Activated CD8-positive, alpha-beta T cell treated with anti-CD3 and anti-CD28 coated beads for 36 hours (primary cell): ENCODE measurements at regions of chr2 and their contacts with region 1.

Region 1: GRCh38 chr2:28566521-28567041 is 70.7 kb downstream of the PLB1 start:
- DNase-seq: peak; percentile 91
- ATAC-seq: peak; percentile 99
- H3K4me3 Mint-ChIP-seq: peak overlapping the region; percentile 81
- H3K27ac Mint-ChIP-seq: peak overlapping the region; percentile 76
- H3K4me1 Mint-ChIP-seq: peaks cover 11% of the 10 kb centered on the region
- H3K27me3 Mint-ChIP-seq: peaks cover 2% of the 10 kb centered on the region
- CTCF ChIP-seq: peak; percentile 100

Region 2: DNA sequence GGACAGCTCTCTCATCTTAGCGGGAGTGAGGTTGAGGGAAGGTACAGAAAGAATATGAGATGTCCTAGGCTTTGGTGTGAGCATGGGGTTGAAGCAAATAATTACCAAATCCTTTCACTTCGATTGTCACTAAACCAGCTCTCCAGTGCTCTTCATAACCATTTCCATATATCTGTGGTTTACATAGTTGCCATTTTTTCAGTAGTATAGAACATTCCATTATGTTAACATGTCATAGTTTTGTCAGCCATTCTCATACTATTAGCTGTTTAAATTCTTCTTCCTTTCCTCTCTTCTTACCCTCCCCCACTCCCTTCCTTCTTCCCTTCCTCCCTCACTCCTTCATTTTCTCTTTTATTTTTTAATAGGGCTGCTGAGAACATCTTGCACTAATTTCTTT is 470.2 kb before region 1 on chr2:
- CTCF ChIA-PET with region 1: no interaction called
- POLR2A ChIA-PET with region 1: no interaction called
- intact Hi-C with region 1: no loop called
- DNase-seq: no peak
- ATAC-seq: no peak
- H3K4me3 Mint-ChIP-seq: no peak overlapping the region
- H3K27ac Mint-ChIP-seq: no peak overlapping the region
- H3K4me1 Mint-ChIP-seq: no peaks in the 10 kb centered on the region
- H3K27me3 Mint-ChIP-seq: no peaks in the 10 kb centered on the region
- CTCF ChIP-seq: no peak

Region 3: GRCh38 chr2:28137221-28137620 is 429.4 kb before region 1 on chr2:
- CTCF ChIA-PET with region 1: no interaction called
- POLR2A ChIA-PET with region 1: no interaction called
- intact Hi-C with region 1: no loop called
- DNase-seq: no peak
- ATAC-seq: no peak
- H3K4me3 Mint-ChIP-seq: no peak overlapping the region
- H3K27ac Mint-ChIP-seq: no peak overlapping the region
- H3K4me1 Mint-ChIP-seq: peaks cover 21% of the 10 kb centered on the region
- H3K27me3 Mint-ChIP-seq: no peaks in the 10 kb centered on the region
- CTCF ChIP-seq: no peak

Region 4: GRCh38 chr2:28583899-28584553 is 17.4 kb after region 1 on chr2:
- CTCF ChIA-PET with region 1: interaction called, 16 read pairs
- POLR2A ChIA-PET with region 1: interaction called, 4 read pairs
- intact Hi-C with region 1: no loop called
- DNase-seq: peak; percentile 88
- ATAC-seq: peak; percentile 93
- H3K4me3 Mint-ChIP-seq: no peak overlapping the region
- H3K27ac Mint-ChIP-seq: peak overlapping the region; percentile 57
- H3K4me1 Mint-ChIP-seq: peaks cover 46% of the 10 kb centered on the region
- H3K27me3 Mint-ChIP-seq: no peaks in the 10 kb centered on the region
- CTCF ChIP-seq: no peak

Region 5: GRCh38 chr2:28661589-28662001 is 95.0 kb after region 1 on chr2:
- CTCF ChIA-PET with region 1: no interaction called
- POLR2A ChIA-PET with region 1: no interaction called
- intact Hi-C with region 1: no loop called
- DNase-seq: no peak
- ATAC-seq: no peak
- H3K4me3 Mint-ChIP-seq: no peak overlapping the region
- H3K27ac Mint-ChIP-seq: no peak overlapping the region
- H3K4me1 Mint-ChIP-seq: peaks cover 9% of the 10 kb centered on the region
- H3K27me3 Mint-ChIP-seq: no peaks in the 10 kb centered on the region
- CTCF ChIP-seq: no peak

Region 6: DNA sequence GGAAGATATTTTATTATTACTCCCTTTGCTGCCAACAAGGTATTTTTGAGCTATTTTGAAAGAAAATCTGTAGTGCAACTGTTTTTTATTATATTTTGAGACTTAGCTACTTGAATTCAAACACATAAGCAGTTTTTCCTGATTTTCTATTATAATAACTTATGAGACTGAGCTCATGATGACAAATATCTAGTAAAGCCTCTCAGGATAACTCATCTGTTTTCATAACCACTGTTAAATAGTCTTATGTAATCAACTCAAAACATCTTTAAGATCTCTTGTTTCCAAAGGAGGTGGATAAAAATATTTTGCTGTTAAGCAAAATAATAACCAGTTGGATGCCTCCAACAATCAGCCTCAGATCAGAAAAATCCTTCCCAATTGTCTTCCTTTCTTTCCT is 163.1 kb after region 1 on chr2:
- CTCF ChIA-PET with region 1: interaction called, 13 read pairs
- POLR2A ChIA-PET with region 1: no interaction called
- intact Hi-C with region 1: no loop called
- DNase-seq: no peak
- ATAC-seq: no peak
- H3K4me3 Mint-ChIP-seq: no peak overlapping the region
- H3K27ac Mint-ChIP-seq: no peak overlapping the region
- H3K4me1 Mint-ChIP-seq: peaks cover 3% of the 10 kb centered on the region
- H3K27me3 Mint-ChIP-seq: no peaks in the 10 kb centered on the region
- CTCF ChIP-seq: no peak

Region 7: GRCh38 chr2:28761420-28761819 is 194.8 kb after region 1 on chr2:
- CTCF ChIA-PET with region 1: interaction called, 15 read pairs
- POLR2A ChIA-PET with region 1: no interaction called
- intact Hi-C with region 1: no loop called
- DNase-seq: no peak
- ATAC-seq: no peak
- H3K4me3 Mint-ChIP-seq: no peak overlapping the region
- H3K27ac Mint-ChIP-seq: peak overlapping the region; percentile 46
- H3K4me1 Mint-ChIP-seq: peaks cover 75% of the 10 kb centered on the region
- H3K27me3 Mint-ChIP-seq: no peaks in the 10 kb centered on the region
- CTCF ChIP-seq: no peak